PC-3 (cell line): ENCODE measurements at regions of chr14 and their contacts with region 1.

Region 1: DNA sequence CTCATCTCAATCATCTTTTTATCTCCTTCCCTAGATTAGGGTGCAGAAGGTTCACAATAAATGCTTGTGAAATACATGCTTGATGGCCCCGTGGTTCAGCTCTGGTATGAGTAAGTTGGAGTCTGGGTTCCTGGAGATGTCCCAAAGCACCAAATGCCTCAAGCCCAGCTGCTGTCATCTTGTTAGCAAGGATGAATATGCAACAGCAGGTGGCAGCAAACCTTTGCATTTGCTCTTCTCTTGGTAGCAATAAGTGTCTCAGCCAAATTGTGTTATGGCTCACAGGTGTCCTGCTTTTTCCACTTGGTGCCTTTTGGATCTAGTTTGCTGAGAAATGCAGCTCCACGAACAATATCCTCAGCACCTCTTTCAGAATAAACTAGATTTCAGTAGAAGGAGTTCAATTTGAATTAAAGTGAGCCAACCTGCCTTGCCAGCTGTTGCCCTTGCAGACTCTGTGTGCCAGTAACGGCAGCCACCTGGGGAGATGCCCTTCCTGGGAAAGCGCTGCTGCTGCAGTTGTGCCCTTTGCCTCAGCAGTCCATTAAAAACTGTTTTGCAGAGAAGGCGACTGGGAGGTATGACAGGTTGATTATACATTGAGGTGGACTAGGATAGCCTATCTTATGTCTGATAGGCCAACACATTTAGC is 417.3 kb downstream of the SNAPC1 start:
- DNase-seq: peak; percentile 84
- ATAC-seq: peak; percentile 97
- H3K4me3 ChIP-seq: no peak overlapping the region
- H3K27ac ChIP-seq: no peak overlapping the region
- H3K4me1 ChIP-seq: no peaks in the 10 kb centered on the region
- H3K27me3 ChIP-seq: peaks cover 24% of the 10 kb centered on the region
- CTCF ChIP-seq: peak; percentile 90

Region 2: DNA sequence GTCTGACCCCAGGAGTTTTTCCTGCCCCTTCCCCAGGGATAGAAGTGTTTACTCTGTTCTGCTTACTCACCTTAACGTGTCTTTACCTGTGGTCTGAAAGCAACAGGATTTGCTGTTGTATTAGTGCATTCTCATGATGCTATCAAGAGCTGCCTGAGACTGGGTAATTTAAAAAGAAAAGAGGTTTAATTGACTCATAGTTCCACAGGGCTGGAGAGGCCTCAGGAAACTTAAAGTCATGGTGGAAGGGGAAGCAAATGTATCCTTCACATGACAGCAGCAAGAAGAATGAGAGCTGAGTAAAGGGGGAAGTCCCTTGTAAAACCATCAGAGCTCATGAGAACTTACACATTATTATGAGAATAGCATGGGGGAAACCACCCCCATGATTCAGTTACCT is 176.9 kb before region 1 on chr14:
- CTCF ChIA-PET with region 1: no interaction called
- POLR2A ChIA-PET with region 1: no interaction called
- intact Hi-C with region 1: no loop called
- DNase-seq: peak; percentile 86
- ATAC-seq: peak; percentile 48
- H3K4me3 ChIP-seq: peak overlapping the region; percentile 55
- H3K27ac ChIP-seq: peak overlapping the region; percentile 98
- H3K4me1 ChIP-seq: peaks cover 31% of the 10 kb centered on the region
- H3K27me3 ChIP-seq: no peaks in the 10 kb centered on the region
- CTCF ChIP-seq: no peak

Region 3: GRCh38 chr14:62691613-62692487 is 512.4 kb after region 1 on chr14:
- CTCF ChIA-PET with region 1: no interaction called
- POLR2A ChIA-PET with region 1: no interaction called
- intact Hi-C with region 1: loop called (anchors 5 kb)
- DNase-seq: peak; percentile 95
- ATAC-seq: peak; percentile 97
- H3K4me3 ChIP-seq: peak overlapping the region; percentile 47
- H3K27ac ChIP-seq: peak overlapping the region; percentile 76
- H3K4me1 ChIP-seq: peaks cover 35% of the 10 kb centered on the region
- H3K27me3 ChIP-seq: no peaks in the 10 kb centered on the region
- CTCF ChIP-seq: no peak

Region 4: DNA sequence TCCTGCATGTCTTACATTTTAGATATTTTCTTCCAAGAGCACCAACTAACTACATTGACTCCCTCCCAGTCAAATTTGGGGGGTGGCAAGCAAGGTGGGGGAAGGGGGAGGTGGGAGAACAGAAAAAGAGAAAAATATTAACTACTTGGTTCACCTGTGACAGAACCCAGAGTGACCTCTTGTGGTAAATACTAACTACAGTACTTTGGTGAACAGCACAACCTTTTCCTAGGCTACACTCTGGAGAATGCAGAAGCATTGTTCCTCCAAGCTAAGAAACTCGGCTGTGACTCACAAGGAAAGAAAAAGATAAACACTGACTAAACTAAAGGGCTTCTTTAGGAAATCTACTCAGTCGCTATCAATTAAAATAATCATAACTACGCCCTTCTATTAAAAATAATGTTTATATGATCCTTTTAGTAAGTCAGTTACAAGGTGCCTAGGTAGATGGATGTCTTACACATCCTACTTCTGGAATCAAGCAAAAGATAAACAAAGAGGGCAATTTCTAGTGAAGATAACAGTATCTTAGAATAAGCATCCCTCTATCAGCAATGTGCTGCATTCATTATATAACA is 860.4 kb after region 1 on chr14:
- CTCF ChIA-PET with region 1: interaction called, 5 read pairs
- POLR2A ChIA-PET with region 1: no interaction called
- intact Hi-C with region 1: loop called (anchors 1 kb)
- DNase-seq: peak; percentile 86
- ATAC-seq: peak; percentile 100
- H3K4me3 ChIP-seq: no peak overlapping the region
- H3K27ac ChIP-seq: no peak overlapping the region
- H3K4me1 ChIP-seq: no peaks in the 10 kb centered on the region
- H3K27me3 ChIP-seq: peaks cover 62% of the 10 kb centered on the region
- CTCF ChIP-seq: peak; percentile 71

Region 5: DNA sequence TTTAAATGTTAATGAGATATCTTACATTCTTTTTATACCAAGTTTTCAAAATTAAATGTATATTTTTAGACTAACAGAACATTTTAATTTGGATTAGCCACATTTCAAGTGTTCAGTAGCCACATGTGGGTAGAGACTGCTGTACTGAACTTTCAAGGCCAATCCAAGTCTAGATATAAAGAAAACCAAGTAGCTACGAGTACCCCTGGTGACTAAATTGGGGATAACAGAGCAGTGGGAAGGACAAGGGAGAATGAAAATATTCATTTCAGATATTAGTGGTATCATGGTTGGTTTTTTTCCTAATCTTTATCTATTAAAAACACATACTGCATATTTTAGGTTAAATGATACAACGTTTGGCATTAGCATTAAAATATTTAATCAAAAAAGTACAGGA is 955.3 kb after region 1 on chr14:
- CTCF ChIA-PET with region 1: no interaction called
- POLR2A ChIA-PET with region 1: no interaction called
- intact Hi-C with region 1: loop called (anchors 1 kb)
- DNase-seq: peak; percentile 48
- ATAC-seq: peak; percentile 59
- H3K4me3 ChIP-seq: no peak overlapping the region
- H3K27ac ChIP-seq: no peak overlapping the region
- H3K4me1 ChIP-seq: no peaks in the 10 kb centered on the region
- H3K27me3 ChIP-seq: no peaks in the 10 kb centered on the region
- CTCF ChIP-seq: peak; percentile 58

Region 6: GRCh38 chr14:63276492-63277342 is 1097.2 kb after region 1 on chr14:
- CTCF ChIA-PET with region 1: interaction called, 6 read pairs
- POLR2A ChIA-PET with region 1: no interaction called
- intact Hi-C with region 1: loop called (anchors 1 kb)
- DNase-seq: peak; percentile 76
- ATAC-seq: peak; percentile 84
- H3K4me3 ChIP-seq: no peak overlapping the region
- H3K27ac ChIP-seq: no peak overlapping the region
- H3K4me1 ChIP-seq: no peaks in the 10 kb centered on the region
- H3K27me3 ChIP-seq: peaks cover 43% of the 10 kb centered on the region
- CTCF ChIP-seq: peak; percentile 98